ENCODE measurements at regions of chr4 and their contacts with region 1.

Region 1: GRCh38 chr4:144056800-144057199 is 37.6 kb upstream of the GYPB start:
- DNase-seq: no peak
- ATAC-seq: no peak
- H3K4me3 ChIP-seq: no peak overlapping the region
- H3K4me3 Mint-ChIP-seq: no peak overlapping the region
- H3K27ac ChIP-seq: no peak overlapping the region
- H3K27ac Mint-ChIP-seq: no peak overlapping the region
- H3K4me1 ChIP-seq: no peaks in the 10 kb centered on the region
- H3K4me1 Mint-ChIP-seq: no peaks in the 10 kb centered on the region
- H3K27me3 ChIP-seq: no peaks in the 10 kb centered on the region
- H3K27me3 Mint-ChIP-seq: peaks cover 2 to 4% of the 10 kb centered on the region in 2 donors

Region 2: GRCh38 chr4:145396581-145396980 is 1339.8 kb after region 1 on chr4:
- CTCF ChIA-PET with region 1: no interaction called
- POLR2A ChIA-PET with region 1: no interaction called
- DNase-seq: no peak
- ATAC-seq: no peak
- H3K4me3 ChIP-seq: no peak overlapping the region
- H3K4me3 Mint-ChIP-seq: no peak overlapping the region
- H3K27ac ChIP-seq: no peak overlapping the region
- H3K27ac Mint-ChIP-seq: no peak overlapping the region
- H3K4me1 ChIP-seq: no peaks in the 10 kb centered on the region
- H3K4me1 Mint-ChIP-seq: no peaks in the 10 kb centered on the region
- H3K27me3 ChIP-seq: no peaks in the 10 kb centered on the region
- H3K27me3 Mint-ChIP-seq: peaks cover 2 to 16% of the 10 kb centered on the region in 2 donors

Region 3: DNA sequence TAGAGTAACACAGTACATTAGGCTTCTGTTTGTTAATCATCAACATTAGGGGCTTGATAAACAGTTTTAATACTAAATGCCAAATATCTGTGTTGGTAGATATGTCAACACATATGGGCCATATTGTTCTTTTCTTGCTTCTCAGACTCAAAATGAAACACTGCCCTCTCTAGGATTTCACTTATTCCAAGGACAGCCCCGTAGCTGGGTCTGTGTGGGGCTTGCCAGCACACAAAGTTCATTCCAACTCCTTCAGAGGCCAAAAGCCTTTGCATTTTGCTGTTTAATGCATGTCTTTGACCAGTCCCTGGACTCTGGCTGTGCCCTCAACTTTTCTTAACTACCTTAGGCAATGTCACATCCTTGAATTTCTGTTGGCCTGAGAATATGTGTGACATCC is 1983.8 kb after region 1 on chr4:
- CTCF ChIA-PET with region 1: no interaction called
- POLR2A ChIA-PET with region 1: interaction called in 1 of 2 experiments, 12 read pairs
- DNase-seq: no peak
- ATAC-seq: no peak
- H3K4me3 ChIP-seq: no peak overlapping the region
- H3K4me3 Mint-ChIP-seq: no peak overlapping the region
- H3K27ac ChIP-seq: no peak overlapping the region
- H3K27ac Mint-ChIP-seq: no peak overlapping the region
- H3K4me1 ChIP-seq: no peaks in the 10 kb centered on the region
- H3K4me1 Mint-ChIP-seq: no peaks in the 10 kb centered on the region
- H3K27me3 ChIP-seq: no peaks in the 10 kb centered on the region
- H3K27me3 Mint-ChIP-seq: peaks cover 4 to 5% of the 10 kb centered on the region in 2 donors